PC-9 (cell line): ENCODE measurements at regions of chr5 and their contacts with region 1.

Region 1: DNA sequence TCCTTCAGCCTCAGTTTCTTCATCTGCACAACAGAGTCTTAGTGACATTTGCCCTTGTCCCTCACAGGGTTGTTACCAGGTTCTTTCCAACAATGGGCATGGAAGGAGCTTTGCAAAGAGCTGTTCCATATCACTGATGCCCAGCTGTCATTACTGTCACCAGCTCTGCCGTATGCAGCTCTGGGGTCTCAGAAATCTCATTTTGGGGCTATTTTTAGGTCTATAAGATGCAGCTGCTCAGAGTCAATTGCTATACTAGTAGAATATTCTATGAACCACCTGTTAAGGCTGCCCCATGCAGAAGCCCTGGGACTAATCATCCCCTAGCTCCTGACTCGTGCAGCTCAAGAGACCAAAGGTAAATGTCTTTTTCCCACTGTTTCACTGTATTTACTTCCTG is 105.1 kb upstream of the TNPO1 start:
- DNase-seq: no peak
- H3K4me3 ChIP-seq: no peak overlapping the region
- H3K27ac ChIP-seq: no peak overlapping the region
- H3K4me1 ChIP-seq: no peaks in the 10 kb centered on the region
- H3K27me3 ChIP-seq: no peaks in the 10 kb centered on the region
- CTCF ChIP-seq: no peak

Region 2: DNA sequence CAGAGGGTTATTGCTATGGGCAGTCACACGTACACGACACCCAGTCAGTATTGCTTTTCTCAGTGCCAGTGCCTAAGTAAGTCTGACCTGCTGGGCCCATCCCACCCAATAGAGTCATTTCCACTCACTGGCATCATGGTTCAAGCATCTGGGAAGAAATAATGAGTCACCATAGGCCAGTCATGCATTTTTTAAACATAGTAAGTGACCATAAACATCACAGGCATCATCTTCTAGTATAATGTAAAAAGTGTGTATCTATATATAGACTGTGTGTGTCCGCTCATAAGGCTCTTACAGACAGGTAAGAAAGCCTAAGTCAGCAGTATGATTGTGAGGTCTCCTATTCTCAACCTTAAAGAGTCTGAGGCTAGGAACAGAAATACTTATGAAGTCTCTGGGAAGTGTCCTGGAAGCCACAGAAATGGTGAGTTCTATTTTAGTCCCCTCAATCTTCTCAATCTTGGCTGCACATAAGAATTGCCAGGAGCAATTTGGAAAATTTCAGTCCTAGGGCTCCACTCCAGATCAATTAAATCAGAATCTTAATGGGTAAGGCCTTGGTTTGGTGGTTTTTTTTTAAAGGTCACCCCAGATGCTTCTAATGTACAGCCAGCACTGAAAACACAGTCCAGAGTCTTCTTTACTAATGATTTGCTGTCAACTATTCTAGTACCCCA is 269.4 kb before region 1 on chr5:
- CTCF ChIA-PET with region 1: no interaction called
- POLR2A ChIA-PET with region 1: no interaction called
- intact Hi-C with region 1: no loop called
- DNase-seq: peak; percentile 17 to 43
- H3K4me3 ChIP-seq: no peak overlapping the region
- H3K27ac ChIP-seq: no peak overlapping the region
- H3K4me1 ChIP-seq: peaks cover 13% of the 10 kb centered on the region
- H3K27me3 ChIP-seq: no peaks in the 10 kb centered on the region
- CTCF ChIP-seq: no peak

Region 3: DNA sequence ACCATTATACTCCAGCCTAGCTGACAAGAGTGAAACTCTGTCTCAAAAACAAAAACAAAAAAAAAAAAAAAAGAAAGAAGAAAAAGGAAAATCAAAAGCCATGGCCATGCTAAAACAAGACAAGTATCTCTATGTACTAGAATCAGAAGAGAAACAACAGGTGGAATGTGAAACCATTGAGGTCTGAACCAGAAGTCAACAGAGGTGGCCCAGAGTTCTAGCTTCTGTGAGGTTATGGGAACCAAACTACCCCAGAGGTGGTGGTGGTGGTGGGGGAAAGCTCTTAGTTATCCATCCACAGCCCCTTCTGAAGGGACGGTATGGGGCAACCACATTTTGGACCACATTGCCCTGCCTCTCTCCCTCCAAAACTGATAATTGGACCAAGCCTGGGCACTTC is 144.6 kb before region 1 on chr5:
- CTCF ChIA-PET with region 1: interaction called, 12 read pairs
- POLR2A ChIA-PET with region 1: no interaction called
- intact Hi-C with region 1: no loop called
- DNase-seq: no peak
- H3K4me3 ChIP-seq: no peak overlapping the region
- H3K27ac ChIP-seq: no peak overlapping the region
- H3K4me1 ChIP-seq: no peaks in the 10 kb centered on the region
- H3K27me3 ChIP-seq: no peaks in the 10 kb centered on the region
- CTCF ChIP-seq: no peak

Region 4: GRCh38 chr5:72847989-72848473 is 136.7 kb after region 1 on chr5:
- CTCF ChIA-PET with region 1: no interaction called
- POLR2A ChIA-PET with region 1: no interaction called
- intact Hi-C with region 1: no loop called
- DNase-seq: peak; percentile 77 to 85
- H3K4me3 ChIP-seq: peak overlapping the region; percentile 94
- H3K27ac ChIP-seq: peak overlapping the region; percentile 80
- H3K4me1 ChIP-seq: peaks cover 70% of the 10 kb centered on the region
- H3K27me3 ChIP-seq: no peaks in the 10 kb centered on the region
- CTCF ChIP-seq: peak; percentile 54; the same call in 1 of the 2 replicates

Region 5: DNA sequence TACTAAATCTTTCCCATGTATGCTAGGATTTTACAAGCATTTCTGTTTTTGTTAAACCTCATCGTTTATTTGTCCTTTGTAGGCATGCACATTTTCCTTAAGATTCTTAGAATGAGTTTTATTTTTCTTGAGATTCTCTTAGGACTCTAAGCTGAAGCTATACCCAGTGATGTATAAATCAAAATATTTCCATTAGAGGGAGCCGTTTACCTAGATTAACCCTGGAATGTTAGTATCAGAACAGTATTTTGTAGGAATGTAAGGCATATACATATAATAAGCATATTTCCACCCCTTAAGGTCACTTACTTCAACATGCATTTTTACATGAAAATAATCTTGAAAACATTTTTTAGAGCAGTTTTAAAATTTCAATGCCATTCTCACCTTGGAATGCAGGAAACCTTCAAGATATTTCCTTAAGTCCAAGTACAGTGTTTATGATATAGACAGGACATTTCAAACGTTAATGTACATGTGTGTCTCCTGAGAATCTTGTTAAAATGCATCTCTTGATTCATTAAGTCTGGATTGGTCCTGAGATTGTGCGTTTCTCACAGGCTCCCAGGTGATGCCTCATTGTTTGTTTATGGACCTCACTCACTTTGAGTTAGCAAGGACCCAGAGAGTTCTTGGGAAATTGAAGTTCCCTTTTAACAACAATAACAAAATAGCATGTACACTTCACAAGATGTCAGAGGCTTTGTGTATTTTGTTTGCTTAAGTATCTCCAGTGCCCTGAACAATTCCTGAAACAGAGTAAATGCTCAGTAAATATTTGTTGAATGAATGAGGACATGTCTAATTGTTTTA is 209.5 kb after region 1 on chr5:
- CTCF ChIA-PET with region 1: no interaction called
- POLR2A ChIA-PET with region 1: interaction called, 11 read pairs
- intact Hi-C with region 1: no loop called
- DNase-seq: peak in 1 of 2 experiments; percentile 52
- H3K4me3 ChIP-seq: no peak overlapping the region
- H3K27ac ChIP-seq: no peak overlapping the region
- H3K4me1 ChIP-seq: no peaks in the 10 kb centered on the region
- H3K27me3 ChIP-seq: no peaks in the 10 kb centered on the region
- CTCF ChIP-seq: peak; percentile 69